ENCODE measurements at regions of chr1 and their contacts with region 1.

Region 1: DNA sequence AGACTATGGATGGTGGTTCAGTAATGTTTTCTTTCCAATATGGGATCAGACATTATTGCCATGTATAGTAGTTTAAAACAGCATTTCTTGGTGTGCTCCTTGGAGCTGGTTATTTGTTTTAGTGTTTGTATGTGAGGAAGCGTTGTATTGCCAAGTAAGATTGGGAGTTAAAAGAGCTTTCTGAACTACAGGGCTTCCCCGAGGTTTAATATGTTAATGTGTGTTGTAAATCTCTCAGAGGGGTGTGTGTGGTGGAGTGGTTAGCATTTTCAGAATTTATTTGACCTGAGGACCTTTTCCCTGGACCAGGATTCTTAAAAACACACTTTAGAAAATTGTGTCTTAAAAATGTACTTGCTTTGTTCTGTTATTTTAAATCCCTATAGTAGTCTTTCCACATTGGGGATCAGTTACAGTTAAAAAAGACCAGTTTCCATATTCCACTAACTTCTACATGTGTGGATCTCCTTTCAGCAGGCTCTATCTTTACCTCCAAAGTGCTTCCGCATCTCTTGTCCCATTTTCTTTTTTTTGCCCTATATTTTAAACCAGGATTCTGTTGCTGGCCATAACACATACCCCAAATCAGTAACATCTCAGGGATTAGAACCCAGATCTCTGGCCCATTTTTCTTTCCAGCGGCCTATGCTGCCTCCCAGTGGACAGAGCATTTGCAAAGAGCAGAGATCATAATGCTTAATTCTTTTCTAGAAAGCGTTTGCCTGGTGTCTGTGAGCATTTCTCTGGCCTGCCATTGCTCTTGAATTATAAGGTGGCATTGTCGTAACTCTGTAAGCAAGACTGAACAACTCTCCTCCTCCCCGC is 58.6 kb downstream of the PBX1 start:
- DNase-seq: peak; percentile 19
- ATAC-seq: peak; percentile 75
- H3K4me3 ChIP-seq: no peak overlapping the region
- H3K27ac ChIP-seq: no peak overlapping the region
- H3K4me1 ChIP-seq: peaks cover 24 to 30% of the 10 kb centered on the region in 2 experiments
- H3K27me3 ChIP-seq: no peaks in the 10 kb centered on the region
- CTCF ChIP-seq: peak; percentile 69 to 82 (median 72); a peak in 5 of 6 replicates
- POLR2A ChIP-seq: no peak
- RAD21 ChIP-seq: peak; percentile 92

Region 2: DNA sequence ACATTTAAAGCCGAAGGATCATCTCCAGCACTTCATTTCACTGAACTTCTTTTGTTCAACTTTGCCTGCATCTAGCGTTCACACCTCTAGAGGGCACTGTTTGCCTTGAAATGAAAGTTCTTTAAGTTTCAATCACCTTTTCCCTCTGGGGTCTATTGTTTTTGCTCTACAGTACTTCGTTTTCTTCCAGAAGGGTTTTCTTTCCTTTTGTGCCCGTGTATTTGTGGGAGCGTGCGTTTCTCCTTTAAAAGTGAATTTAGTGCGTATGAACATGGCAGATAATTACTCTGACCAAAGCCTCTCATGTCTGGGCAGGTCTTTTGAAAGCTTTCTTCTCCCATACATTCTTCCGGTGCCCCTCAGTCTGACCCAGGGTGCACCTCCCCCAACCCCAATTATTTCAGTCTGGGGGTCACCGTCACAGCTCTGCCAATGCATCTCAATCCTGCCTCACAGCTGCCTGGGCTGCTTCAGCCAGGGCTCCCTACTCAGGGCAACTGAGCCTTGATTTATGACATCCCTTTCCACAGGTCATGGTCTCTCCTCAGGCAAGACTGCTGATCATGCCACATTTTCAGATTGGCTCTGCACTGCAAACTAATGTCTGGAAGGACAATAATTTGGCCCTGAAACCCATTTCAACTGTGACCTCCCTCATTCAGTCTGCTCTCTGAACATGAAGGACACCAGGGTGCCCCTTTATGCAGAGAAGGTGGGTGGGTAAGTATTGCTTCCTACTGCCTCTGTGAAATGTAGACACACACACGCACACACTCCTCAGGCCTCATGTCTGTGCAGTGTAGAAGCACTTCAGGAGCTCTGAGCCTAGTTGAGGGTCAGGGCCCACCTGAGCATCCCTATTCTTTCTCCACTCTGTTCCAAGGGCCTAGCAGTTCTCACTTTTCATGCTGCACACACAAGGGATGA is 1207.3 kb before region 1 on chr1:
- CTCF ChIA-PET with region 1: no interaction called
- POLR2A ChIA-PET with region 1: no interaction called
- RAD21 ChIA-PET with region 1: no interaction called
- intact Hi-C with region 1: loop called (anchors 2 kb)
- DNase-seq: peak; percentile 48
- ATAC-seq: peak; percentile 34
- H3K4me3 ChIP-seq: no peak overlapping the region
- H3K27ac ChIP-seq: no peak overlapping the region
- H3K4me1 ChIP-seq: no peaks in the 10 kb centered on the region
- H3K27me3 ChIP-seq: peaks cover 4% of the 10 kb centered on the region; the same call in 1 of the 2 replicates
- CTCF ChIP-seq: peak; percentile 49 to 89 (median 73); a peak in 5 of 6 replicates
- POLR2A ChIP-seq: no peak
- RAD21 ChIP-seq: peak; percentile 78

Region 3: GRCh38 chr1:163820766-163821165 is 796.8 kb before region 1 on chr1:
- CTCF ChIA-PET with region 1: no interaction called
- POLR2A ChIA-PET with region 1: no interaction called
- RAD21 ChIA-PET with region 1: no interaction called
- intact Hi-C with region 1: loop called (anchors 5 kb)
- DNase-seq: no peak
- ATAC-seq: no peak
- H3K4me3 ChIP-seq: no peak overlapping the region
- H3K27ac ChIP-seq: no peak overlapping the region
- H3K4me1 ChIP-seq: no peaks in the 10 kb centered on the region
- H3K27me3 ChIP-seq: no peaks in the 10 kb centered on the region
- CTCF ChIP-seq: peak in 1 of 3 experiments; percentile 30; a peak in 1 of 6 replicates
- POLR2A ChIP-seq: no peak
- RAD21 ChIP-seq: no peak

Region 4: DNA sequence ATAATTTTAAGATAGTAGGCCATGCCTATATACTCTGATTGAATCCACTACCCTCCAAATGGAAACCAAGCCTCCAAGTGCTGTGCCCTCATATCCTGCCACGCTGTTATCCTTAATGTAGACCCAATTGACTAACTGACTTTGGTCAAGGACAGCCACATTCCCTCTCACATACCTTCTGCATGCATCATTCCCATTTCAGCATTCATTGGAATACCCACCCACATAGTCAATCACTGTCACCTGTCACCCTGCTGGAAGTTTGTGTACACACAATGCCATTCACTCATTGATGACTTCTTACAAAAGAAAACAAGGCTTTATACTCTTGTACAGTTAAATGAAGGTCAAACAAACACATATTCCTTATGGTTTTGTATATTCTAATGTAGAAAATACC is 279.7 kb before region 1 on chr1:
- CTCF ChIA-PET with region 1: no interaction called
- POLR2A ChIA-PET with region 1: no interaction called
- RAD21 ChIA-PET with region 1: no interaction called
- intact Hi-C with region 1: no loop called
- DNase-seq: peak; percentile 4
- ATAC-seq: peak; percentile 50; the same call in 1 of the 2 replicates
- H3K4me3 ChIP-seq: no peak overlapping the region
- H3K27ac ChIP-seq: no peak overlapping the region
- H3K4me1 ChIP-seq: peaks cover 0 to 3% of the 10 kb centered on the region in 2 experiments; a peak in 1 of 4 replicates
- H3K27me3 ChIP-seq: no peaks in the 10 kb centered on the region
- CTCF ChIP-seq: no peak
- POLR2A ChIP-seq: no peak
- RAD21 ChIP-seq: no peak

Region 5: GRCh38 chr1:164440232-164440631 is 177.4 kb before region 1 on chr1:
- CTCF ChIA-PET with region 1: no interaction called
- POLR2A ChIA-PET with region 1: no interaction called
- RAD21 ChIA-PET with region 1: no interaction called
- intact Hi-C with region 1: loop called (anchors 5 kb)
- DNase-seq: no peak
- ATAC-seq: peak; percentile 98
- H3K4me3 ChIP-seq: no peak overlapping the region
- H3K27ac ChIP-seq: no peak overlapping the region
- H3K4me1 ChIP-seq: peaks cover 3 to 9% of the 10 kb centered on the region in 2 experiments; a peak in 3 of 4 replicates
- H3K27me3 ChIP-seq: no peaks in the 10 kb centered on the region
- CTCF ChIP-seq: peak in 2 of 3 experiments; percentile 60 to 65; a peak in 4 of 6 replicates
- POLR2A ChIP-seq: no peak
- RAD21 ChIP-seq: peak; percentile 58

Region 6: GRCh38 chr1:164683235-164683634 is 65.6 kb after region 1 on chr1:
- CTCF ChIA-PET with region 1: no interaction called
- POLR2A ChIA-PET with region 1: no interaction called
- RAD21 ChIA-PET with region 1: no interaction called
- intact Hi-C with region 1: no loop called
- DNase-seq: peak; percentile 78
- ATAC-seq: peak; percentile 88
- H3K4me3 ChIP-seq: peak overlapping the region in 1 of 2 experiments; percentile 30; a peak in 2 of 4 replicates
- H3K27ac ChIP-seq: peak overlapping the region; percentile 52
- H3K4me1 ChIP-seq: peaks cover 48 to 49% of the 10 kb centered on the region in 2 experiments
- H3K27me3 ChIP-seq: no peaks in the 10 kb centered on the region
- CTCF ChIP-seq: no peak
- POLR2A ChIP-seq: no peak
- RAD21 ChIP-seq: no peak; the same call in 1 of the 2 replicates

Region 7: DNA sequence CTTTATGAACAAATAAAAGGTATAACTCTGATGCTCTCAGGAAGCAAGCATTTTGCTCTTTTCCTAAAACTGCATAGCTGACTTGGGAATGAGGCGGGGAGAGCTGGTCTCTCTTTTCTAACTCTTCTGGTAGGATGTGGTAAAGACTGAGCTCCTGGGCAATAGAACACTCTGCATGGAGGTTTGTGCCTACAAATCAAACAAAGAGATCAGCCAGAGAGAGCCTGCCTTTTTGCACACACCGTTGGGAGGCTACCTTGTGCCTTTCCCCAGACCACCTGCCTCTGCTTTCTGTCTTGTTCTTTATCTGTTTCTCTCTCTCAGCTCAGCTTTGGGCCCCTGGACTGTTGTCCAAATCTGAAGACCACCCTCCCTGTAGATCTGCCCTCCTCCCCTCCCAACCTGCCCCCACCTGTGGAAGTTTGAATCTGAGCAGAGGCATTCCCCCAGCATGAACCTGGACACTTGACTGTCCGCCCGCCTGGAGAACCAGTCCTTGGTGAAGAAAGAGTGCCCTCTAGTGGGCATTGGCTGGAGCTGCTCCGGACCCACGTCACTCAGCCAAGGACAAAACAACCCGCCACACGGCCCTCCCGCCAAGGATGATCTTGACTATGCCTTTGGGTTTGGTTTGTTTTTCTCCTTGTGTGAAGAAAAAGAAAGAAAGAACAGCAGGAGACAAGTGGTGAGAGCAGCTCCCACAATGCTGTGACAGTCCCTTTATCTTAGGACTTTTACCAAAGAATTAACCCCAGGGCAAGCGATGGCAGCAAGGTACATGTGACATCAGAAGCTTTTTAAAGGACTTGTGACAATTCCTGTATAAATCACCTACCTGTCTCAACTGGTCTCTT is 169.6 kb after region 1 on chr1:
- CTCF ChIA-PET with region 1: interaction called, 3 read pairs
- POLR2A ChIA-PET with region 1: no interaction called
- RAD21 ChIA-PET with region 1: interaction called in 1 of 2 experiments, 3 read pairs
- intact Hi-C with region 1: loop called (anchors 1 kb)
- DNase-seq: peak; percentile 65
- ATAC-seq: peak; percentile 98
- H3K4me3 ChIP-seq: no peak overlapping the region
- H3K27ac ChIP-seq: 0 out of 2 replicates have a peak overlapping the region, but pooled peaks have one; percentile 19
- H3K4me1 ChIP-seq: peaks cover 17 to 20% of the 10 kb centered on the region in 2 experiments; a peak in 3 of 4 replicates
- H3K27me3 ChIP-seq: no peaks in the 10 kb centered on the region
- CTCF ChIP-seq: peak; percentile 68 to 97 (median 90); a peak in 5 of 6 replicates
- POLR2A ChIP-seq: no peak
- RAD21 ChIP-seq: peak; percentile 98

Region 8: GRCh38 chr1:164886101-164886500 is 268.5 kb after region 1 on chr1:
- CTCF ChIA-PET with region 1: no interaction called
- POLR2A ChIA-PET with region 1: no interaction called
- RAD21 ChIA-PET with region 1: no interaction called
- intact Hi-C with region 1: no loop called
- DNase-seq: no peak
- ATAC-seq: no peak
- H3K4me3 ChIP-seq: no peak overlapping the region
- H3K27ac ChIP-seq: no peak overlapping the region
- H3K4me1 ChIP-seq: no peaks in the 10 kb centered on the region
- H3K27me3 ChIP-seq: 0 out of 2 replicates have a peak, but pooled peaks cover 4% of the 10 kb centered on the region
- CTCF ChIP-seq: no peak
- POLR2A ChIP-seq: no peak
- RAD21 ChIP-seq: no peak

Region 9: GRCh38 chr1:164922585-164922984 is 305.0 kb after region 1 on chr1:
- CTCF ChIA-PET with region 1: no interaction called
- POLR2A ChIA-PET with region 1: no interaction called
- RAD21 ChIA-PET with region 1: no interaction called
- intact Hi-C with region 1: no loop called
- DNase-seq: no peak
- ATAC-seq: no peak
- H3K4me3 ChIP-seq: no peak overlapping the region
- H3K27ac ChIP-seq: no peak overlapping the region
- H3K4me1 ChIP-seq: no peaks in the 10 kb centered on the region
- H3K27me3 ChIP-seq: no peaks in the 10 kb centered on the region; the same call in 1 of the 2 replicates
- CTCF ChIP-seq: no peak
- POLR2A ChIP-seq: no peak
- RAD21 ChIP-seq: no peak

Measured in HCT116 (cell line).